Esophagus squamous epithelium (tissue), 5 donors: ENCODE measurements at regions of chr19 and their contacts with region 1.

Region 1: GRCh38 chr19:12840091-12841079 is 2.1 kb downstream of the MAST1 start:
- DNase-seq: no peak
- H3K4me3 ChIP-seq: peak overlapping the region in 3 of 4 donors; percentile 9 to 44 (median 14)
- H3K27ac ChIP-seq: no peak overlapping the region
- H3K4me1 ChIP-seq: peaks cover 12 to 40% (median 12%) of the 10 kb centered on the region in 3 donors
- H3K27me3 ChIP-seq: peaks cover 2 to 100% (median 21%) of the 10 kb centered on the region in 4 donors
- CTCF ChIP-seq: no peak
- POLR2A ChIP-seq: no peak

Region 2: GRCh38 chr19:12774584-12775555 is 65.5 kb before region 1 on chr19 and contains the start of gene HOOK2:
- intact Hi-C with region 1: loop called (anchors 5 kb)
- DNase-seq: peak; percentile 63
- H3K4me3 ChIP-seq: peak within 1 kb of the TSS; percentile 58 to 90 (median 71)
- H3K27ac ChIP-seq: peak within 1 kb of the TSS; percentile 95 to 98 (median 98)
- H3K4me1 ChIP-seq: peaks cover 21 to 50% (median 29%) of the 10 kb centered on the region in 3 donors
- H3K27me3 ChIP-seq: no peaks in the 10 kb centered on the region
- CTCF ChIP-seq: peak in 1 of 6 experiments; percentile 25
- POLR2A ChIP-seq: peak in 3 of 4 donors; percentile 27 to 47 (median 36)
- total RNA-seq, gene HOOK2: 41.4 to 76.5 (median 61.6) TPM

Region 3: GRCh38 chr19:13574933-13575332 is 734.5 kb after region 1 on chr19:
- intact Hi-C with region 1: no loop called
- DNase-seq: no peak
- H3K4me3 ChIP-seq: no peak overlapping the region
- H3K27ac ChIP-seq: no peak overlapping the region
- H3K4me1 ChIP-seq: no peaks in the 10 kb centered on the region
- H3K27me3 ChIP-seq: peaks cover 0 to 68% (median 0%) of the 10 kb centered on the region in 4 donors
- CTCF ChIP-seq: peak in 1 of 6 experiments; percentile 30
- POLR2A ChIP-seq: no peak